ENCODE measurements at regions of chr15 and their contacts with region 1.

Region 1: GRCh38 chr15:47196057-47196456 is 521.2 kb upstream of the SEMA6D start:
- DNase-seq: peak; percentile 75
- H3K4me3 ChIP-seq: no peak overlapping the region
- H3K27ac ChIP-seq: no peak overlapping the region
- H3K4me1 ChIP-seq: peaks cover 0 to 3% (median 0%) of the 10 kb centered on the region in 4 donors
- H3K27me3 ChIP-seq: no peaks in the 10 kb centered on the region
- CTCF ChIP-seq: peak; percentile 68 to 80 (median 73)
- EP300 ChIP-seq: no peak
- POLR2A ChIP-seq: no peak

Region 2: GRCh38 chr15:46394463-46394862 is 801.6 kb before region 1 on chr15:
- in situ Hi-C with region 1: no loop called
- intact Hi-C with region 1: no loop called
- DNase-seq: no peak
- H3K4me3 ChIP-seq: no peak overlapping the region
- H3K27ac ChIP-seq: no peak overlapping the region
- H3K4me1 ChIP-seq: no peaks in the 10 kb centered on the region
- H3K27me3 ChIP-seq: no peaks in the 10 kb centered on the region
- CTCF ChIP-seq: no peak
- EP300 ChIP-seq: no peak
- POLR2A ChIP-seq: no peak

Region 3: DNA sequence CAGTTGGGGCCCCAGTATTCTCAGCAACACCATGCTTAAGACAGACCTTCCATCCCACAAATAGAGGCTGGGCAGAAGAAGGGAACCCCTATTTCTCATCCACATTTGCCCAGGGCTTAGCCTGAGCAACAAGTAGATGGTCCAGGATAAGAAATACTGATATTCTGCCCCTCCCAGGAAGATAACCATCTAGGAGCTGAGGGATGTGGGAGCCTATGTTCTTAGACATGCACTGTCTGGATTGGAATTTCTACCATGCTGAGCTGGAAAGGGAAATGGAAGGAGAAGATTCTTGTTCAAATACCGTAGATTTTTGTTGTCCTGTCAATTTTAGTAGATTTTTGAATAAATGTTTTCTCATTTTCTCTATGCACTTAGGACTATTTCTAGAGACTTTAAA is 70.5 kb after region 1 on chr15:
- in situ Hi-C with region 1: no loop called
- intact Hi-C with region 1: no loop called
- DNase-seq: no peak
- H3K4me3 ChIP-seq: no peak overlapping the region
- H3K27ac ChIP-seq: no peak overlapping the region
- H3K4me1 ChIP-seq: no peaks in the 10 kb centered on the region
- H3K27me3 ChIP-seq: no peaks in the 10 kb centered on the region
- CTCF ChIP-seq: no peak
- EP300 ChIP-seq: no peak
- POLR2A ChIP-seq: no peak

Region 4: GRCh38 chr15:48059791-48060190 is 863.7 kb after region 1 on chr15:
- in situ Hi-C with region 1: no loop called
- intact Hi-C with region 1: no loop called
- DNase-seq: no peak
- H3K4me3 ChIP-seq: no peak overlapping the region
- H3K27ac ChIP-seq: no peak overlapping the region
- H3K4me1 ChIP-seq: peaks cover 0 to 3% (median 0%) of the 10 kb centered on the region in 4 donors
- H3K27me3 ChIP-seq: no peaks in the 10 kb centered on the region
- CTCF ChIP-seq: no peak
- EP300 ChIP-seq: no peak
- POLR2A ChIP-seq: no peak

Region 5: GRCh38 chr15:48250640-48251076 is 1054.6 kb after region 1 on chr15:
- in situ Hi-C with region 1: loop called in 3 of 4 experiments (anchors 25 kb)
- intact Hi-C with region 1: no loop called
- DNase-seq: peak; percentile 12
- H3K4me3 ChIP-seq: no peak overlapping the region
- H3K27ac ChIP-seq: no peak overlapping the region
- H3K4me1 ChIP-seq: no peaks in the 10 kb centered on the region
- H3K27me3 ChIP-seq: no peaks in the 10 kb centered on the region
- CTCF ChIP-seq: peak; percentile 46 to 64 (median 55)
- EP300 ChIP-seq: no peak
- POLR2A ChIP-seq: no peak